MCF 10A (cell line): ENCODE measurements at regions of chr5 and their contacts with region 1.

Region 1: DNA sequence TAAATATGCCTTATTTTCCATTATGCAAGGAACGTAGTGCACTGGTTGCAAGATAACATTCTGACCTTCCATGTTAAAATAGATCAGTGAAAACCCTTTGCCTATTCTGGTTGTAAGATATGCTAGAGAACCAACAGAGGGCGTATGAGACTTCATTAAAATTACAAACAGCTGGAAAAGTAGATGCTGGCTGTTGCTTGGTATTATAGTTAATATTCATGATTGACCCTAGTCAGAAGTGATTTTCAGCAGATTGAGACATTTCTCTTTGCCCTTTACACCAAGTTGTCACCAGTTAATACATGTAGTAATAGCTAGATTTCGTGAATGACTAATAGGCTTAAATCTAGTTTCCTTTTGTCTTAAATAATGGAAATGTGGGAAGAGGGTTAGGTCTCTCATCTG is 13.8 kb upstream of the FGF18 start:
- DNase-seq: no peak
- H3K4me3 Mint-ChIP-seq: no peak overlapping the region
- H3K27ac Mint-ChIP-seq: peak overlapping the region; percentile 57
- H3K4me1 Mint-ChIP-seq: peaks cover 43% of the 10 kb centered on the region
- H3K27me3 Mint-ChIP-seq: no peaks in the 10 kb centered on the region
- CTCF ChIP-seq: peak; percentile 41

Region 2: GRCh38 chr5:171342362-171343111 is 63.1 kb before region 1 on chr5:
- CTCF ChIA-PET with region 1: no interaction called
- POLR2A ChIA-PET with region 1: no interaction called
- intact Hi-C with region 1: no loop called
- DNase-seq: peak; percentile 82
- H3K4me3 Mint-ChIP-seq: no peak overlapping the region
- H3K27ac Mint-ChIP-seq: no peak overlapping the region
- H3K4me1 Mint-ChIP-seq: no peaks in the 10 kb centered on the region
- H3K27me3 Mint-ChIP-seq: no peaks in the 10 kb centered on the region
- CTCF ChIP-seq: peak; percentile 94

Region 3: DNA sequence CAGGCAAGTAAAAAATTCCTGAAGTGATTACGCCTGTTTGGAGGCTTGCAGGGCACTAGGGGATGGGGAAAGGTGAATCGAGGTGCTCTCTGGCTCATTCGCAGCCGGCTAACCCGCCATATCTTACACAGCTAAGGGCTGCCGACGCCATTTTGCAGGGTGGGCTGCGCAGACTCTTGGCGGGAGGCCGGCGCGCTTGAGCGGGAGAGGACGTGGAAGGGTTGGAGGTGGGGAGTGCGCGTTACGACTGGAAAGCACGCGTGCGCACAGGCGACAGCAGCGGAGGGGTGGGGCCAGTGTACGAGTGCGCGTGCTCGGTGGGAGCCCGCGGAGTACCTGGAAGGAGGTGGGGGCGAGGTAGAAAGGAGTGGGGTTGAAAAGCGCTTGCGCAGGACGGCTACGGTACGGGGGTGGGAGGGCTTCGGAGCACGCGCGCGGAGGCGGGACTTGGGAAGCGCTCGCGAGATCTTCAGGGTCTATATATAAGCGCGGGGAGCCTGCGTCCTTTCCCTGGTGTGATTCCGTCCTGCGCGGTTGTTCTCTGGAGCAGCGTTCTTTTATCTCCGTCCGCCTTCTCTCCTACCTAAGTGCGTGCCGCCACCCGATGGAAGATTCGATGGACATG is 18.1 kb before region 1 on chr5 and contains the start of gene NPM1:
- CTCF ChIA-PET with region 1: interaction called, 20 read pairs
- POLR2A ChIA-PET with region 1: interaction called, 38 read pairs
- intact Hi-C with region 1: no loop called
- DNase-seq: peak; percentile 99
- H3K4me3 Mint-ChIP-seq: peak within 1 kb of the TSS; percentile 99
- H3K27ac Mint-ChIP-seq: peak within 1 kb of the TSS; percentile 99
- H3K4me1 Mint-ChIP-seq: peaks cover 34% of the 10 kb centered on the region
- H3K27me3 Mint-ChIP-seq: no peaks in the 10 kb centered on the region
- CTCF ChIP-seq: no peak
- total RNA-seq, gene NPM1: 3,249 and 4,548 TPM in 2 replicates

Region 4: GRCh38 chr5:171392585-171393159 is 12.9 kb before region 1 on chr5:
- CTCF ChIA-PET with region 1: interaction called, 20 read pairs
- POLR2A ChIA-PET with region 1: interaction called, 38 read pairs
- intact Hi-C with region 1: no loop called
- DNase-seq: no peak
- H3K4me3 Mint-ChIP-seq: peak overlapping the region; percentile 99
- H3K27ac Mint-ChIP-seq: no peak overlapping the region
- H3K4me1 Mint-ChIP-seq: peaks cover 62% of the 10 kb centered on the region
- H3K27me3 Mint-ChIP-seq: no peaks in the 10 kb centered on the region
- CTCF ChIP-seq: peak; percentile 5

Region 5: DNA sequence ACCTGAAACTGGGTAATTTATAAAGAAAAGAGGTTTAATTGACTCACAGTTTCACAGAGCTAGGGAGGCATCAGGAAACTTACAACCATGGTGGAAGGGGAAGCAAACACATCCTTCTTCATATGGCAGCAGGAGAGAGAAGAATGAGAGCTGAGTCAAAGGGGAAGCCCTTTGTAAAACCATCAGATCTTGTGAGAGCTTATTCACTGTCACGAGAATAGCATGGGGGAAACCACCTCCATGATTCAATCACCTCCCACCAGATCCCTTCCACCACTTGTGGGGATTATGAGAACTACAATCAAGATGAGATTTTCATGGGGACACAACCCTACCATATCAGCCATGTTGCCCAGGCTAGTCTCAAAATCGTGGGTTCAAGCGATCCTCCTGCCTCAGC is 157.2 kb after region 1 on chr5:
- CTCF ChIA-PET with region 1: no interaction called
- POLR2A ChIA-PET with region 1: no interaction called
- intact Hi-C with region 1: no loop called
- DNase-seq: no peak
- H3K4me3 Mint-ChIP-seq: no peak overlapping the region
- H3K27ac Mint-ChIP-seq: no peak overlapping the region
- H3K4me1 Mint-ChIP-seq: no peaks in the 10 kb centered on the region
- H3K27me3 Mint-ChIP-seq: peaks cover 26% of the 10 kb centered on the region
- CTCF ChIP-seq: no peak